MCF 10A (cell line): ENCODE measurements at regions of chr1 and their contacts with region 1.

Region 1: GRCh38 chr1:6475381-6476133 is 9.6 kb upstream of the TNFRSF25 start:
- DNase-seq: peak; percentile 52
- H3K4me3 Mint-ChIP-seq: no peak overlapping the region
- H3K27ac Mint-ChIP-seq: no peak overlapping the region
- H3K4me1 Mint-ChIP-seq: peaks cover 13% of the 10 kb centered on the region
- H3K27me3 Mint-ChIP-seq: no peaks in the 10 kb centered on the region
- CTCF ChIP-seq: peak; percentile 90

Region 2: GRCh38 chr1:6423321-6423999 is 52.1 kb before region 1 on chr1:
- CTCF ChIA-PET with region 1: interaction called, 12 read pairs
- POLR2A ChIA-PET with region 1: no interaction called
- intact Hi-C with region 1: loop called (anchors 2 kb)
- DNase-seq: peak; percentile 91
- H3K4me3 Mint-ChIP-seq: no peak overlapping the region
- H3K27ac Mint-ChIP-seq: no peak overlapping the region
- H3K4me1 Mint-ChIP-seq: peaks cover 25% of the 10 kb centered on the region
- H3K27me3 Mint-ChIP-seq: no peaks in the 10 kb centered on the region
- CTCF ChIP-seq: peak; percentile 66